ENCODE measurements at regions of chr10 and their contacts with region 1.

Region 1: DNA sequence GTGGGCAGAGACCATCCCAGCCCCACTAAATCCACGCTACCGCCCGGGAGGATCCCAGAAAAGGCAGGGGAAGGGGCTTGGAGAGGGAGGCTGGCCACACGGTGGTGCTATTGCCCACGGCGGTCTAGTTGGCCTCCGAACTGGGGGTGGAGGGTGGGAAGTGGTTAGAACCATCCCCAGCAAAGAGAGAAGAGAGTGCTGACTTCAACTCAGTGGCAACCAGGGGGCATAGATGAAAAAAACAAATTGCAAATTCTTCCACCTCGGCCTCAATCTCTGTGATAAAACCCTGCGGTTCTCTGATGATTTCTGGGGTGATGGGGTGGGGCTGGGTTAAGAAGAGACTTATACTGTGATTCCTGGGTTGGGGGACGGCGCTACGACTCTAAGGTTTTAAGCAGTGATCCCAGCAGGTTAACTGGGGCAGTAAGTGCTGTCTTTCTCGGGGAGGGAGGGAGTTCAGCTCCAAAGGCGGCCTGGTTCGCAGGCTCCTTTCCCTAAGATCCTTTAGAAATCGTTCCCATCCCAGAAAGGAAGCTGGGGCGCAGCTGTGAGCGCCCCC is 154.5 kb upstream of the LYZL2 start:
- DNase-seq: peak; percentile 95
- H3K4me3 ChIP-seq: peak overlapping the region; percentile 36 to 64; a peak in 3 of 4 replicates
- H3K27ac ChIP-seq: peak overlapping the region; percentile 70 to 91
- H3K4me1 ChIP-seq: peaks cover 19 to 25% of the 10 kb centered on the region in 2 experiments
- H3K27me3 ChIP-seq: no peaks in the 10 kb centered on the region
- CTCF ChIP-seq: peak; percentile 94
- EP300 ChIP-seq: no peak
- RAD21 ChIP-seq: peak; percentile 93

Region 2: GRCh38 chr10:30751678-30752331 is 32.2 kb before region 1 on chr10:
- CTCF ChIA-PET with region 1: interaction called, 21 read pairs
- POLR2A ChIA-PET with region 1: no interaction called
- DNase-seq: peak; percentile 67
- H3K4me3 ChIP-seq: no peak overlapping the region; a peak in 1 of 4 replicates
- H3K27ac ChIP-seq: peak overlapping the region in 1 of 2 experiments; percentile 64; a peak in 2 of 4 replicates
- H3K4me1 ChIP-seq: peaks cover 0 to 30% of the 10 kb centered on the region in 2 experiments; a peak in 1 of 4 replicates
- H3K27me3 ChIP-seq: no peaks in the 10 kb centered on the region
- CTCF ChIP-seq: peak; percentile 79
- EP300 ChIP-seq: no peak
- RAD21 ChIP-seq: peak; percentile 86

Region 3: DNA sequence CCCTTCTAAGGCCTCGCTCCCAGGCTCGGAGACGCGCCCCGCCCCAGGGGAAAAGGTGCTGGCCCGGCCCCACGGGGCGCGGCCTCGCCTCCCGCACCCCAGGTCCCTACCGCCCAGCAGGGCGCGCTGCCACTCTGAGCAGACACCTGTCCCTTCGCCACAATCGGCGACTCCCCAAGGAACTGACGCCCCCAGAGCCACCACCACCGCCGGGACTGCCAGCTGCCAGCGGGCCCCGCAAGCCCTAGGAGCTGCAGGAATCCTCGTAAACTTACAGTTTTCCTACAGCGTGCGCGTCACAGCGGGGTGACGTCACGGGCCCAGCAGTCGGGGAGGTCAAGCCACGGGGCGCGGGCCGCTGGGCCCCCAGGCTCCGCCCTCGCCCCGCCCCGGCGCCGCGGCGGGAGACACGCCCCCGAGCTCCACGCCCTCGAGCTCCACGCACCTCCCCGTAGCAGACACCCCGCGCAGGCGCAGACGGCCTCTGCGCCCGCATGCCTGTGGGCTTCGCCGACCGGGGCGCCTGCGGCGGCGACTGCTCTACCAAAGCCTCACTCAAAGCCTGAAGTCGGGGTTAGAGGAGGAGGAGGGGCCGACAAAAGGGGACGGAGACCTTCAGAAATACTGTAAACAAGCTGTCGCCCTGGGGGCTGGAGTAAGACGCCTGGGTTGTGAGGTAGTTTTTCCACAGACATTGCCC is 247.7 kb after region 1 on chr10 and contains the start of gene ZNF438:
- CTCF ChIA-PET with region 1: interaction called, 27 read pairs
- POLR2A ChIA-PET with region 1: interaction called, 7 read pairs
- DNase-seq: peak; percentile 98
- H3K4me3 ChIP-seq: peak within 1 kb of the TSS; percentile 70 to 88
- H3K27ac ChIP-seq: peak within 1 kb of the TSS; percentile 98
- H3K4me1 ChIP-seq: peaks cover 5 to 10% of the 10 kb centered on the region in 2 experiments; a peak in 3 of 4 replicates
- H3K27me3 ChIP-seq: no peaks in the 10 kb centered on the region
- CTCF ChIP-seq: peak; percentile 67
- EP300 ChIP-seq: no peak
- RAD21 ChIP-seq: peak; percentile 64
- polyA plus RNA-seq, gene ZNF438: 2.1 and 2.5 TPM in 2 replicates

Region 4: GRCh38 chr10:31770307-31770902 is 986.4 kb after region 1 on chr10:
- CTCF ChIA-PET with region 1: interaction called, 14 read pairs
- POLR2A ChIA-PET with region 1: interaction called, 3 read pairs
- DNase-seq: peak; percentile 73
- H3K4me3 ChIP-seq: no peak overlapping the region; a peak in 1 of 4 replicates
- H3K27ac ChIP-seq: peak overlapping the region in 1 of 2 experiments; percentile 82; a peak in 2 of 4 replicates
- H3K4me1 ChIP-seq: peaks cover 7 to 21% of the 10 kb centered on the region in 2 experiments; a peak in 2 of 4 replicates
- H3K27me3 ChIP-seq: no peaks in the 10 kb centered on the region
- CTCF ChIP-seq: peak; percentile 55
- EP300 ChIP-seq: no peak
- RAD21 ChIP-seq: peak; percentile 78

Region 5: DNA sequence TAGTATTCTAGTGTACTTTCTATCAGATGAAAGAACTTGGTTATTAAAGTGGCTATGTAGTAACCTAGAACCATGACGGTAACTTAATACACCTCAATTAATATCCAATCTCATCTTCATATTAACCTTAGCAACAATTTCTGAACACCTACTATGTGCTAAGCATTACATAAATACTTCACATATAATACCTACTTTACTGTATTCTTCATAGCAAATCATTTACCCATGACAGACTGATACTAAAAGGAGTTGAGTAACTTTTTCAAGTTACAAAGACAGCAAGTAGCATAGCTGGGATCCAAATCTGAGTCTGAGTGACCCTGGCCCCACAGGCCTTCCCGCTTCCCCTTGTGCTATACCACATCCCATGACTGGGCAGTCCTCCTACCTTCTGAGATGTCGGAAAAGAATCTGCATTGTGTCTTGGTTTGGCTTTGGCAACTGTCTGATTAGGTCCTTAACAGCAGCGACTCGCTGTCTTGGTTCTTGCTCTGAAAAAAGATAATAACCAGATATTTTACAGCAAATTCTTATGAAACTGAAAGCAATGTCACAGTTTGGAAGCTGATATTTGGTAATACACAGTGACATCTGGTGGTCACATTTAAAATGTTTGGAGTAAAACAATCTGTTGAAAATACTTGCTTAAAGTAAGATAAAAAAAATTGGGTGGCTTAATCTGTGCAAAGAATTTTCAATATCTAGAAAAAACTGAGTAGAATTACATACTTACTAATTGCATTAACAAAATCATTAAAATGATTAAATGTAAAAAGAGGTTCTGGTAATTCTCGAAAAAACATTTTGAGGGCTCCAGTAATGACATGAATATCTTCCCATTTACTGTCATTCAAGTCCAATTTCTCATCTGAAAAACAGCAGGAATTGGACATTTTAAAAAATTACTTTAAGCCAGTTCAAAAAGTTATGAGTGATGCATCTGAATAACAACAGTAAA is 1024.5 kb after region 1 on chr10:
- CTCF ChIA-PET with region 1: interaction called, 25 read pairs
- POLR2A ChIA-PET with region 1: no interaction called
- DNase-seq: peak; percentile 32
- H3K4me3 ChIP-seq: peak overlapping the region in 1 of 2 experiments; percentile 39; a peak in 2 of 4 replicates
- H3K27ac ChIP-seq: peak overlapping the region; percentile 59 to 72
- H3K4me1 ChIP-seq: peaks cover 0 to 3% of the 10 kb centered on the region in 2 experiments; a peak in 1 of 4 replicates
- H3K27me3 ChIP-seq: no peaks in the 10 kb centered on the region
- CTCF ChIP-seq: peak; percentile 72
- EP300 ChIP-seq: no peak
- RAD21 ChIP-seq: peak; percentile 85

Measured in SK-N-SH (cell line).